Esophagus squamous epithelium (tissue), 5 donors: ENCODE measurements at regions of chr20 and their contacts with region 1.

Region 1: DNA sequence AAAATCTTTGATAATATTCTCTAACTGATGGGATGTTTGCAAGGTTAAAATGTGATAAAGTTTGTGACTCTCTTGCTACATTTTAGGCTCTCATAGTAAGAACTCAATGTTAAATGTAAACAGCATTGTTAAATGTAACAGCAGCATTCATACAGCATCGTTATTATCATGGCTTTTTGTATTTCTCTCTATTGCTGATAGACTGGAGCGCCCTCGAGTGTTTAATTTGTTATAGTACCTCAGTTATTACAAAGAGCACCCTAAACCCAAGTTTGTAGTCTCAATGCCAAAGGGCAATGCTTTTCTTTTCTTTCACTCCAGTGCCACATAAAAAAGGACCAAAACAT is 14.9 kb upstream of the TTPAL start:
- DNase-seq: no peak
- H3K4me3 ChIP-seq: no peak overlapping the region
- H3K27ac ChIP-seq: no peak overlapping the region
- H3K4me1 ChIP-seq: no peaks in the 10 kb centered on the region
- H3K27me3 ChIP-seq: no peaks in the 10 kb centered on the region
- CTCF ChIP-seq: peak in 5 of 6 experiments; percentile 23 to 69 (median 26)
- POLR2A ChIP-seq: no peak

Region 2: DNA sequence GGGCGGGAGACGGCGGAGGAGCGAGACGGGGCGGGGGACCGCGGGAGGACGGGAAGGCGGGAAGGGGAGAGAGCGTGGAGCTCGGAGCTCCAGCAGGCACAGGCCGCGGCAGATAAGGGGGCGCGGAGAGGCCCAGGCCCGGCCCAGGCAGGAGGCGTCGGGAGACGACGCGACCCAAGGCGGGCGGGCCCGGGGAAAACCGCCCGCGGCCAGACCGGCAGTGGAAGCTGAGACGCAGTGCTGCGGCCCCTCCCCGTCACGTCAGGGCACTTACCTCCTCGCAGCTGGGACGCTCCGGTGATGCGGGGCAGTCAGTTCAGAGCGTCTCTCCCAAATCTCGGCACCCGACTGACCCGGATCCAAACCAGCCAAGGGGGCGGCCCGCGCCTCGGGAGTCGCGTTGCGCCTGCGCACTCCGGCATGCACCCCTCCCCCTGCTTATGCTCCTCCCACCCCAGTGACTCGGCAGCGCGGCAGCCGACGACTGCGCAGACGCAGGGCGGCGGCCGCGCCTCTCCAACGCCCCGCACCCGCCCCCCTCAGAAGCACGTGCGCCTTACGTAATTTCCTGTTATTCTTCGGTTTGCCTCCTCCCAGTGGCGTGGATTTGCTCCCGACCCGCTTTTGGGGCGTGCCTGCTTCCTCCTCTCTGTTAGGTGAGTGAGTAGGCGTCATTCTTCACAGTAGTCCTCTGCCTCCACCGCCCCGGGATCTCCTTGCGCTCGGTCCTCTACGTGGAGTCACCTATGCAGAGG is 250.2 kb before region 1 on chr20 and contains the start of gene OSER1:
- intact Hi-C with region 1: loop called (anchors 10 kb)
- DNase-seq: peak; percentile 90
- H3K4me3 ChIP-seq: peak within 1 kb of the TSS; percentile 76 to 98 (median 91)
- H3K27ac ChIP-seq: peak within 1 kb of the TSS; percentile 97 to 100 (median 100)
- H3K4me1 ChIP-seq: peaks cover 7 to 64% (median 24%) of the 10 kb centered on the region in 3 donors
- H3K27me3 ChIP-seq: no peaks in the 10 kb centered on the region
- CTCF ChIP-seq: peak in 2 of 6 experiments; percentile 24 to 25
- POLR2A ChIP-seq: peak in 3 of 4 donors; percentile 92 to 98 (median 94)
- total RNA-seq, gene OSER1: 16.1 to 62.2 (median 25.0) TPM

Region 3: GRCh38 chr20:44398303-44398702 is 62.5 kb before region 1 on chr20:
- intact Hi-C with region 1: loop called (anchors 10 kb)
- DNase-seq: no peak
- H3K4me3 ChIP-seq: no peak overlapping the region
- H3K27ac ChIP-seq: no peak overlapping the region
- H3K4me1 ChIP-seq: no peaks in the 10 kb centered on the region
- H3K27me3 ChIP-seq: peaks cover 0 to 94% (median 0%) of the 10 kb centered on the region in 4 donors
- CTCF ChIP-seq: no peak
- POLR2A ChIP-seq: no peak

Region 4: GRCh38 chr20:44576297-44576696 is 115.5 kb after region 1 on chr20:
- intact Hi-C with region 1: no loop called
- DNase-seq: no peak
- H3K4me3 ChIP-seq: no peak overlapping the region
- H3K27ac ChIP-seq: peak overlapping the region in 3 of 4 donors; percentile 16 to 83 (median 56)
- H3K4me1 ChIP-seq: peaks cover 4 to 75% (median 45%) of the 10 kb centered on the region in 3 donors
- H3K27me3 ChIP-seq: no peaks in the 10 kb centered on the region
- CTCF ChIP-seq: peak in 2 of 6 experiments; percentile 5 to 29
- POLR2A ChIP-seq: no peak